ENCODE measurements at regions of chr5 and their contacts with region 1.

Region 1: GRCh38 chr5:159209438-159210305 is at the start of gene RNF145:
- DNase-seq: peak; percentile 91
- H3K4me3 Mint-ChIP-seq: peak within 1 kb of the TSS; percentile 97
- H3K27ac Mint-ChIP-seq: peak within 1 kb of the TSS; percentile 99
- H3K4me1 Mint-ChIP-seq: peaks cover 36% of the 10 kb centered on the region
- H3K27me3 Mint-ChIP-seq: no peaks in the 10 kb centered on the region
- total RNA-seq, gene RNF145: 70.0 to 75.3 TPM

Region 2: DNA sequence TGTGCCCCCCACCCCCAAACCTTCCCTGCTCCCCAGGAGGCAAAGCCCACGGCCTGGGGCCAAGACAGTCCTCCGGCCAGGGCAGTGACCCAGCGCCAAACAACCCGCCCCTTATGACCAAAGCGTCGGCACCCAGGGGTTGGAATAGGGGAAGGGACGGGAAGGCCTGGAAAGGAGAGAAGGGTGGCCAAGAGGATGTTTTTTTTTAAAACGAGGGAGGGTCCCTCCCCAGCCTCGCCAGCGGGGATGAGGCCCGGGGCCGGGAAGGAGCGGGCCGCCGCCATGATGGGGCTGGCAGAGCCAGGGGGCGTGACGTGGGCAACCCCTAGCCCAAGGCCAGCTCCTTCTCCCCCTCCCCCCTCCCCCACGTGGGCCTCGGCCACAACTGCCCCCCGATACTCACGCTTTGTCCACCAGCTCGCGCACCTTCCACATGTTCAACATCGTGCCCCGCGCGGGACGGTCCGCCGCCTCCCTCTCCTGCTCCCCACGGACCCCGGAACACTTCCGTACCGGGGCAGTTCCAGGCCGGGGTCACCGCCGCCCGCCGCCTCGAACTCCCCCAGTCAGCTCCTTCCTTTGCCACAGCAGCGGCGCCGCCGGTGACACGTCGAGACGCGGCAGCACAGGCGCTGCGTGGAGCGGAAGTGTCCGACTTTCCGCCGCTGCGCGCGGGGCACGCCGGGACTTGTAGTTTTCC is 1351.0 kb before region 1 on chr5 and contains the start of gene CLINT1:
- CTCF ChIA-PET with region 1: no interaction called
- intact Hi-C with region 1: loop called (anchors 10 kb)
- DNase-seq: peak; percentile 90
- H3K4me3 Mint-ChIP-seq: peak within 1 kb of the TSS; percentile 86
- H3K27ac Mint-ChIP-seq: peak within 1 kb of the TSS; percentile 87
- H3K4me1 Mint-ChIP-seq: peaks cover 70% of the 10 kb centered on the region
- H3K27me3 Mint-ChIP-seq: no peaks in the 10 kb centered on the region
- total RNA-seq, gene CLINT1: 31.0 to 32.7 TPM

Region 3: DNA sequence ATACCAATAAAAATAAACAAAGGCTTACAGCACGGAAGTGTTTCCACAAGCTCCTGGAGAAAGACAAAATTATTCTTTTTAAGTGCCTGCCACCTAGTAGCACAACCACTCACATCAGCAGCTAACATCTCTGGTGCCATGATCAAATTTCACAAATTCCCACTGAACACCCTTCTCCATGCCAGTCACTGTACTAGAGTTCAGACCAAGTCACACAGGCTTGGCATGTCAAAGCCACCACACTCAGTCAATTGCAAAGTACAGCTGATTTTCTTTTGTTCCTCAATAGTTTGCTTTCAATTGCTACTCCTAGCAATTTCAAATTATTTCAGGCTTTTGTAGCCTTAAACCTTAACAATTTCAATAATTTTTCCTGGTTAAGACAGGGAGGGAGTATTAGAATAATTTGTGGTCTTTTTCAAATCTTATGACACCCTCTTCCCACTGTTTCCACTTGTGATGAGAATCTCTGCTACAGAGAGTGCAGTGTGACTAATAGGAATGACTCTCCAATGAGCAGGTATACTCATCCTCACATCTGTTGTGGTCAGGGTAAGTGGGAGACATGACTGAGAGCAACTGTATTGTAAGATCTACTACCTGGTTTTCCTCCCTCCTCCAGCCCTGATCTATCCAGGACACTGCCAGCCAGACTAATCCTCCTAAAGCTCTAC is 46.5 kb before region 1 on chr5:
- CTCF ChIA-PET with region 1: no interaction called
- intact Hi-C with region 1: loop called (anchors 1 kb)
- DNase-seq: peak; percentile 41
- H3K4me3 Mint-ChIP-seq: no peak overlapping the region
- H3K27ac Mint-ChIP-seq: peak overlapping the region; percentile 32
- H3K4me1 Mint-ChIP-seq: peaks cover 47% of the 10 kb centered on the region
- H3K27me3 Mint-ChIP-seq: no peaks in the 10 kb centered on the region

Region 4: GRCh38 chr5:159198063-159199036 is 11.3 kb before region 1 on chr5:
- CTCF ChIA-PET with region 1: interaction called, 3 read pairs
- intact Hi-C with region 1: loop called (anchors 1 kb)
- DNase-seq: no peak
- H3K4me3 Mint-ChIP-seq: no peak overlapping the region
- H3K27ac Mint-ChIP-seq: peak overlapping the region; percentile 55
- H3K4me1 Mint-ChIP-seq: peaks cover 74% of the 10 kb centered on the region
- H3K27me3 Mint-ChIP-seq: no peaks in the 10 kb centered on the region

Region 5: DNA sequence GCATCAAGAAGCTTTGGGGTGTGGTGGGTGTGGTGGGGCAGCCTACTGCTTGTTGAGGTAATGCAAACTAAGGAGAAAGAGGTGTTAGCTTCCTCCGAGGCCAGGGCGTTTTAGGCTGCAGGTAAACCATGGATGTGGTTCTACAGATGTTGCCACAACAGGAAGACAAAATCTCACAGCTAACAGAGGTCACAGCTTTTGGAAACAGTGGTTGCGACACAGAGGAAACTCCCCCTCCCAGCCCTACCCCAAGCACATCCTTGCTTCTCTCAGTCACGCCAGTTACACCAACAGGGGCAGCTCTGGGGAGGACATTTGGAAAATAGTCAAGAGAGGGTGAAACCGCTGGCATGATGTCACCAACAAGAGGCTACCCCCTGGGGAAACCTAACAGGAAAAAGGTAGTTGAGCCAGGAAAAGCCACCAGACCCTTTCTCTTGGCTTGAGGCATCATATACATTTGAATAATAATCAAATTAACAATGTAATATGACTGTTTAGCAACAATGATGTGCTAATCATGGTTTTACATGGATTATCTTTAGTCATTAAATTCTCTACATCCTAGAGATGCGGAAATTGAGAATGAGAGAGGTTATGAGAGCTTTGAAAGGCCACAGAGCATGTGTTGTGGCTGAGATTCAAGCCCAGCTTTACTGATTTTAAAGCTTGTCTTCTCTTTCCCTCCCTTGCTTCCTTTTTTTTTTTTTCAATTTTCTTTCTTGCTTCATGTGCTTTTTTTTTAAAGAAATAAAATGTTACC is 202.8 kb after region 1 on chr5:
- CTCF ChIA-PET with region 1: no interaction called
- intact Hi-C with region 1: loop called (anchors 2 kb)
- DNase-seq: peak; percentile 86
- H3K4me3 Mint-ChIP-seq: no peak overlapping the region
- H3K27ac Mint-ChIP-seq: peak overlapping the region; percentile 37
- H3K4me1 Mint-ChIP-seq: peaks cover 54% of the 10 kb centered on the region
- H3K27me3 Mint-ChIP-seq: peaks cover 3% of the 10 kb centered on the region

Region 6: DNA sequence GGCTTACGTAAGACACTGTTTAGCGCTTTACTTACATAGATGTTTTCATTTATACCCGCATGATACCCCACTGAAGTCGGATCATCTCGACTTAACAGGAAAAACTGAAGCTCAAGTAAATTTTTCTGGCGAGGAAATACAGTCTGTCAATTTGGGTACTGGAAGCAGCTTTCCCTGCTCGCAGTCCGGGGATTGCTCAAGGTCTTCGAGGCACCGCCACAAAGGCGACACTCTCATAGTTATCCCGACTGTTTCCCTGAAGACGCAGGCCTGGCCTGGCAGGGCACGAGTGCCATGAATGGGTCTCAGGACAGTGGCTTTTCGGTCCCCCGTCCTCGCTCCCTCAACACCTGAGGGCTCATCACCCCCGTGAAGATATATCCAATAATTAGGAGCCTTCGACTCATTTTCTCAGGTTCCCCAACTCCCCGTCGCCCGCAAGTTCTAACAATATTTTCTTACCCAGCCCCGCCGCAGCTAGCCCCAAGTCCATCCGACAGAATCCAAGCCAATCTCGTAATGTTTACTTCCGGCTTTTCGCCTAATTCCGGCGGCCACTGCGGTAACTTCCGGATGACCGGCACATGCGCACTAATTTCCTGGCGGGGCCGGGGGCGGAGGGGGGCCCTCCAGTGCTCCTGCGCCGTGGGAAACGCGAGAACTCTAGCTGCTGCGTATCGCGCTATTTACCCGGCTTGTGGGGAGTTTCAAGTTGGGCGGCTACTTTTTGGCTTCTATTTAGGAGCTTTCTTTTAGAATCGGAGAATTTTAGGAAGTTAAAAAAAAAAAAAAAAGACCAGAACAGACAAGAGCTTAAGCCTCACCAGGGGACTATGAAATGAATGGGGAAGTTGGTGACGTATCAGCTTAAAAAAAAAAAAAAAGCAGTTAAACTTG is 1209.1 kb after region 1 on chr5 and contains the start of gene SLU7:
- CTCF ChIA-PET with region 1: no interaction called
- intact Hi-C with region 1: loop called (anchors 10 kb)
- DNase-seq: peak; percentile 96
- H3K4me3 Mint-ChIP-seq: peak within 1 kb of the TSS; percentile 97
- H3K27ac Mint-ChIP-seq: peak within 1 kb of the TSS; percentile 94
- H3K4me1 Mint-ChIP-seq: peaks cover 43% of the 10 kb centered on the region
- H3K27me3 Mint-ChIP-seq: no peaks in the 10 kb centered on the region
- total RNA-seq, gene SLU7: 33.2 to 34.3 TPM